CD14-positive monocyte (primary cell): ENCODE measurements at regions of chr9 and their contacts with region 1.

Region 1: GRCh38 chr9:32403567-32404260 is 19.3 kb downstream of the ACO1 start:
- DNase-seq: no peak
- H3K4me3 ChIP-seq: no peak overlapping the region
- H3K4me3 Mint-ChIP-seq: peak overlapping the region in 1 of 2 donors; percentile 64
- H3K27ac ChIP-seq: no peak overlapping the region
- H3K27ac Mint-ChIP-seq: peak overlapping the region in 1 of 7 donors; percentile 0
- H3K4me1 ChIP-seq: no peaks in the 10 kb centered on the region
- H3K4me1 Mint-ChIP-seq: peaks cover 9% of the 10 kb centered on the region
- H3K27me3 ChIP-seq: no peaks in the 10 kb centered on the region
- H3K27me3 Mint-ChIP-seq: peaks cover 0 to 1% (median 0%) of the 10 kb centered on the region in 3 donors
- CTCF ChIP-seq: no peak

Region 2: DNA sequence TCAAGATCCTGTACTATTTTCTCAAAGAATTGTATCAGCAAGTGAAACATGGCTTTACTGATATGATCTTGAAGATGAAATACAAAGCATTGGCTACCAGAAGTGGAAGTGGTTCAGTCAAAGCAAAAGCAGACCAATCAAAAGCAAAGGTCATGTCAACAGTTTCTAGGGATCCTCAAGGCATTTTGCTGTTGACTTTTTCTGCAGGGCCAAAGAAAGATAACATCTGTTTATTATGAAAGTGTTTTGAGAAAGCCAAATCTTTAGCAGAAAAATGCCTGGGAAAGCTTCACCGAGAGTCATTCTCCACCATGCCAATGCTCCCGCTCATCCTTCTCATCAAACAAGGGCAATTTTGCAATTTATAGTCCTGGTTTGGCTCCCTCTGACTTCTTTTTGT is 109.6 kb before region 1 on chr9:
- intact Hi-C with region 1: no loop called
- DNase-seq: no peak
- H3K4me3 ChIP-seq: no peak overlapping the region
- H3K4me3 Mint-ChIP-seq: no peak overlapping the region
- H3K27ac ChIP-seq: no peak overlapping the region
- H3K27ac Mint-ChIP-seq: no peak overlapping the region
- H3K4me1 ChIP-seq: no peaks in the 10 kb centered on the region
- H3K4me1 Mint-ChIP-seq: no peaks in the 10 kb centered on the region
- H3K27me3 ChIP-seq: no peaks in the 10 kb centered on the region
- H3K27me3 Mint-ChIP-seq: peaks cover 0 to 3% (median 2%) of the 10 kb centered on the region in 3 donors
- CTCF ChIP-seq: no peak

Region 3: DNA sequence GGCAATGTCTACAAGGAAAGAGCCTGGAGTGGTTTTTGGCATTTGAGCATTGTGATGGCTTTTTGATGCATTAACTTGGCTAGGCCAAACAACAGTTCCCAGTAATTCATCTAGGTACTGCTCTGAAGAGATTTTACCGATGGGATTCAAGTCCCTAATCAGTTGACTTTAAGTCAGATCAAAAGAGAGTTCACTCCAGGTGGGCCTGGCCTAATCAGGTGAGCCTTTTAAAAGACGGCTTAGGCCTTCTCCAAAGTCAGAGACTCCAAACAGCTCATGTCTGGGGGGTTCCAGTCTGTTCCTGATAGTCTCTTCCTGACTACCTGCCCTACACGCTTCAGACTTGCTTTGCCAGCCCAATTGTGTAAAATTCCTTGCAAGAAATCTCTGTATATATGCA is 68.6 kb after region 1 on chr9:
- intact Hi-C with region 1: loop called in 1 of 2 experiments (anchors 10 kb)
- DNase-seq: no peak
- H3K4me3 ChIP-seq: no peak overlapping the region
- H3K4me3 Mint-ChIP-seq: no peak overlapping the region
- H3K27ac ChIP-seq: no peak overlapping the region
- H3K27ac Mint-ChIP-seq: no peak overlapping the region
- H3K4me1 ChIP-seq: peaks cover 8 to 9% of the 10 kb centered on the region in 2 donors
- H3K4me1 Mint-ChIP-seq: peaks cover 12% of the 10 kb centered on the region
- H3K27me3 ChIP-seq: no peaks in the 10 kb centered on the region
- H3K27me3 Mint-ChIP-seq: peaks cover 0 to 2% (median 0%) of the 10 kb centered on the region in 3 donors
- CTCF ChIP-seq: no peak